HAP-1 (cell line): ENCODE measurements at regions of chr17 and their contacts with region 1.

Region 1: GRCh38 chr17:76121932-76122430 is 18.4 kb upstream of the EXOC7 start:
- DNase-seq: no peak
- H3K4me3 ChIP-seq: no peak overlapping the region
- H3K4me1 ChIP-seq: no peaks in the 10 kb centered on the region
- H3K27me3 ChIP-seq: no peaks in the 10 kb centered on the region

Region 2: DNA sequence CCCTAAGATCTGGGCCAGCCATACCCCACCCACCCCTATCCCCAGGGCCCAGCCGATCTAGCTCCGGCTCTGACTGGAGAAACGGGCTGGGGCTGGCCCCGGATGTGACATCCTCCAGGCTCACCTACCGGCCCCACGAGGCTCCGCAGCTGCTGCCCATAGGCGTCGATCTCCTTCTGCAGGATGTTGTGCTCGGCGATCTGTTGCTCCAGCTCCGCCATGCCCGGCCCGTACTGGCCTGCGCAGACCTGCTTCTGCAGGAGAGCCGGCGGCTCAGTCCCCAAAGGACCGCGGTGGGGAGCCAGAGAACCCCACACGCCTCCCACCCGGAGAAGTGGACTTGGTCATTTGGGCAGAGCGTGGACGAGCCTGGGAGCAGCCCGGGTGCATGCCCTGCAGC is 99.7 kb before region 1 on chr17:
- in situ Hi-C with region 1: no loop called
- DNase-seq: no peak
- H3K4me3 ChIP-seq: no peak overlapping the region
- H3K4me1 ChIP-seq: no peaks in the 10 kb centered on the region
- H3K27me3 ChIP-seq: no peaks in the 10 kb centered on the region

Region 3: DNA sequence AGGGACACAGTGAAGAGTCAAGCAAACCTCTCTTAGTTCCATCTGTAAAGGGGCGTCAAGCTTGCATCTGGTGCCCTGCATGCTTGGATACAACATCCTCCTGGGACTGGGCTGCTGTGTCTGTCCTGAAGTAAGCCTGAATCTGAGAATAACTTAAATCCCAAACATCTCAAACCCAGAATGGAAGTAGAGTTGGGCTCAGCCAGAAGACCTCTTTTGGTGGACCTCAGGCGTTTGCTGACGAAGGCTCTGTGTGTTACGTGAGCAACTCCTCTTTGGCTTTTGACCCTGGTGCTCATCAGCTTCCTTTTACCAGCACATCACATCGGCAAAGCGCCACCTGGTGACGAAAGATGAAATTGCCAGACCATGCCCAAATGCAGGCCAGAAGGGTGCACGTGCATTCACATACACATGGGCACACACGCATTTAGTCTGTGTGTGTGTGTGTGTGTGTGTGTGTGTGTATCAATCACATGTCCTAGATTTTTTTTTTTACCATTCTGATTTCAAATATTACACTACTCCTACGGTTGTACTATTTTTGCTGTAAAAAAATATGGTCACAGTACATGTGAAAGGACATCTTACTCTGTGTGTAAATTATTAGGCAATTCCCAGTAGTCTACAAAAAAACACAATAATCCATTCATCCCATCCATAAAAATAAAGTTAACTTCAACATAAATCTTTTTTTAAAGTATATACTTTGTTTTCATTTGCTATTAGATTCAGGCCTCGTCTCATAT is 60.2 kb after region 1 on chr17:
- in situ Hi-C with region 1: loop called (anchors 5 kb)
- DNase-seq: peak; percentile 82 to 94
- H3K4me3 ChIP-seq: no peak overlapping the region
- H3K4me1 ChIP-seq: peaks cover 6% of the 10 kb centered on the region
- H3K27me3 ChIP-seq: no peaks in the 10 kb centered on the region

Region 4: GRCh38 chr17:76292567-76292966 is 170.6 kb after region 1 on chr17:
- in situ Hi-C with region 1: loop called (anchors 5 kb)
- DNase-seq: no peak
- H3K4me3 ChIP-seq: no peak overlapping the region
- H3K4me1 ChIP-seq: no peaks in the 10 kb centered on the region
- H3K27me3 ChIP-seq: no peaks in the 10 kb centered on the region